Head of caudate nucleus (tissue), 42 donors: ENCODE measurements at regions of chr17 and their contacts with region 1.

Region 1: DNA sequence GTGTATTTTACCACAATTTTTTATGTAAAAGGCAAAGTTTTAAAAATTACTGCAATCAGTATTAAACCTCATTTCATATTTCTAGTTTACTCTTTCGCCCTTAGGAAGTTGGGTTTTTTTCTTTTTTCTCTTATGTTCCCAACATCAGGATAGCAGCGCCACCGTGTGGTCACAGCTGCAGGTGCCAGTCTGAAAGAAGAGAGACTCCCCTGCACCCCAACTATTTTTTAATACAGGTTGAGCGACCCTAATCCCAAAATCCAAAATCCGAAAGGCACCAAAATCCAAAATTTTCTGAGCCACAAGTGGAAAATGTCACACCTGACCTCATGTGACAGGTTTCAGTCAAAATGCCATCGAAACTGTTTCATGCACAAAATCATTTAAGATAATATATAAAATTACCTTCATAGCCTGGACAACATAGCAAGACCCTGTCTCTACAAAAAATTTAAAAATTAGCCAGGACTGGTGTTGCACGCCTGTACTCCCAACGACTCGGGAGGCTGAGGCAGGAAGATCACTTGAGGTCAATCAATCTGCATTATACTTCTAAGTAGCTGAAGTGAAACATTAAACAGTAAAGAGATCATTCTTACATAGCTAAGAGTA is 21.8 kb upstream of the ASGR2 start:
- DNase-seq: peak in 41 of 42 donors; percentile 35 to 91 (median 78)

Region 2: GRCh38 chr17:7045909-7046724 is 90.3 kb before region 1 on chr17:
- intact Hi-C with region 1: loop called (anchors 5 kb)
- DNase-seq: peak in 31 of 42 donors; percentile 26 to 74 (median 48)